CD4-positive, alpha-beta T cell (primary cell): ENCODE measurements at regions of chr9 and their contacts with region 1.

Region 1: GRCh38 chr9:129557192-129558036 is 63.5 kb downstream of the C9orf50 start:
- DNase-seq: no peak
- ATAC-seq: no peak
- H3K4me3 ChIP-seq: no peak overlapping the region
- H3K4me3 Mint-ChIP-seq: no peak overlapping the region
- H3K27ac ChIP-seq: no peak overlapping the region
- H3K27ac Mint-ChIP-seq: no peak overlapping the region
- H3K4me1 ChIP-seq: no peaks in the 10 kb centered on the region
- H3K4me1 Mint-ChIP-seq: no peaks in the 10 kb centered on the region
- H3K27me3 ChIP-seq: peaks cover 3% of the 10 kb centered on the region in 2 experiments
- H3K27me3 Mint-ChIP-seq: peaks cover 3% of the 10 kb centered on the region
- CTCF ChIP-seq: no peak

Region 2: DNA sequence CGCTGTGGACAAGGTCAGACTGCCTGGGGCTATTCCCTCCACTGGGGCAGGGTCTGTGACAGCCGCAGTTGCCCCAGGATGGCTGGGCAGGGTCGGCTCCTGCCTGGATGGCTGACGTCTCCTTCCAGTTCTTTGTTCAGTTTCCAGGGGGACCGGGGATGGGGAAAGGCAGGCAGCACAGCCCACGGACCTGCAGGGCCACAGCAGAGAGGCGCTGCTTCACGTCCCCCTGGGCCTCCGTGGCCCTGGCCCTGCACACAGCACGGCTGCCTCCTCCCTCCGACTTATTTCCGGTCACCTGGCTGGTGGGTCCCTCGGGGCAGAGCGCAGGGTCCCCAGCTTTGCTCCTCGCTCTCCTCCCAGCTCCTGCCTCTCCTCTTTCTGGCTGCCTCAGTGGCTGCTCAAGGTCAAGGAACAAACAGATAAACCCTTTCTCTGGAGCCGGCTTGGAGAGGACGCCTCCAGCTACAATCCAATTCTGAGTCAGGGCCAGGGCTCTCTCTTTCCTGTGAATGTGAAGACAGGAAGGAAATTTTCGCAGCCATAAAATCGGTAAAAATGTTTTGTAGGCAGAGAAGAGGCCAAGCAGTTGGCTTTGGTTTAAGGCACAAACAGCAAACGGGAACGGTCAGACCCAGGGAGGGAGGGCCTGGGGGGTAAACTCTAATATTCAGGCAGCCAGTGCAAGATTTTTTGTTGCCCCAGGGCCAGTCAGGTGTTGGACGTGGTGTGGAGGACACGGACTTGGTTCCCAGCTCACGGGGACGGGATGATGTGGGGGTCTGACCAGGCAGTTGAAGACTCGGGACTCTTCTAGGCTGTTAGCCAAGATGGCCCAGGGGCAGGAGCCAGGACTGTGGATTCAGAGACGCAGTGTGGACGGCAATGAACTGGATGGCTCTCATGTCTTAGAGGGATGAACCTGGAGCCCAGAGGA is 106.1 kb before region 1 on chr9:
- CTCF ChIA-PET with region 1: no interaction called
- POLR2A ChIA-PET with region 1: no interaction called
- intact Hi-C with region 1: loop called in 1 of 2 experiments (anchors 5 kb)
- DNase-seq: no peak
- ATAC-seq: no peak
- H3K4me3 ChIP-seq: no peak overlapping the region
- H3K4me3 Mint-ChIP-seq: no peak overlapping the region
- H3K27ac ChIP-seq: no peak overlapping the region
- H3K27ac Mint-ChIP-seq: no peak overlapping the region
- H3K4me1 ChIP-seq: peaks cover 13% of the 10 kb centered on the region
- H3K4me1 Mint-ChIP-seq: peaks cover 10% of the 10 kb centered on the region
- H3K27me3 ChIP-seq: no peaks in the 10 kb centered on the region
- H3K27me3 Mint-ChIP-seq: no peaks in the 10 kb centered on the region
- CTCF ChIP-seq: no peak